Dendritic cell treated with granulocyte-macrophage colony-stimulating factor and Interleukin-4, amounts not matched to agents 40 ng/mL and 50 ng/mL, for 4 days (primary cell): ENCODE measurements at regions of chr3 and their contacts with region 1.

Region 1: GRCh38 chr3:25782938-25783660 is at the start of gene NGLY1:
- H3K4me3 Mint-ChIP-seq: peak within 1 kb of the TSS; percentile 81
- H3K27ac Mint-ChIP-seq: peak within 1 kb of the TSS; percentile 86
- H3K4me1 Mint-ChIP-seq: peaks cover 38% of the 10 kb centered on the region
- H3K27me3 Mint-ChIP-seq: peaks cover 2% of the 10 kb centered on the region

Region 2: GRCh38 chr3:25621087-25621486 is 162.0 kb before region 1 on chr3:
- intact Hi-C with region 1: no loop called
- H3K4me3 Mint-ChIP-seq: no peak overlapping the region
- H3K27ac Mint-ChIP-seq: no peak overlapping the region
- H3K4me1 Mint-ChIP-seq: no peaks in the 10 kb centered on the region
- H3K27me3 Mint-ChIP-seq: no peaks in the 10 kb centered on the region

Region 3: GRCh38 chr3:25648107-25648535 is 135.0 kb before region 1 on chr3:
- intact Hi-C with region 1: loop called (anchors 5 kb)
- H3K4me3 Mint-ChIP-seq: no peak overlapping the region
- H3K27ac Mint-ChIP-seq: no peak overlapping the region
- H3K4me1 Mint-ChIP-seq: peaks cover 32% of the 10 kb centered on the region
- H3K27me3 Mint-ChIP-seq: no peaks in the 10 kb centered on the region

Region 4: DNA sequence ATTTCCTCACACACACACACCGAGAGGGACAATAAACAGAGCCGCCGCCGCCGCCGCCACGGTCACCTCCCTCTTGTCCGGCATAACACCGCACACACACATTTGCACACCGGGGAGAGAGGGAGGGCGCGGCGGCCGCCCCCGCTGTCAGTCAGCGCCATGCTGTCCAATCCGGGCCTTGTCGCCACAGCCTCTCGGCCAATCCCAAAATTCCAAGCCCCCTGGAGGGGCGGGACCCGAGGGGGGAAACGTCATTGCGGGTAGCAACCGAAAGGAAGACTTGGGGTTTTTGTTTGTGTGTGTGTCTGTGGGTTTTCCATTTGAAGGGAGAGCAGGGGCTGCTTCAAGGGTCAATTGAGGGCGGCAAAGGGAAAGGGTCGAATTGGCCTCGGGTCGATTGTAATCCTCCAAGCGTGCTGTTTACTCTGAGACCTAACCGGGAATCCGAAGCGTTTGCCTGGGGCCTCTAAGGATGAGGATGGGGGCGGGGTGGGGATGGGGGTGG is 118.2 kb before region 1 on chr3 and contains the start of gene TOP2B:
- intact Hi-C with region 1: loop called (anchors 1 kb)
- H3K4me3 Mint-ChIP-seq: peak within 1 kb of the TSS; percentile 94
- H3K27ac Mint-ChIP-seq: peak within 1 kb of the TSS; percentile 97
- H3K4me1 Mint-ChIP-seq: peaks cover 29% of the 10 kb centered on the region
- H3K27me3 Mint-ChIP-seq: no peaks in the 10 kb centered on the region

Region 5: DNA sequence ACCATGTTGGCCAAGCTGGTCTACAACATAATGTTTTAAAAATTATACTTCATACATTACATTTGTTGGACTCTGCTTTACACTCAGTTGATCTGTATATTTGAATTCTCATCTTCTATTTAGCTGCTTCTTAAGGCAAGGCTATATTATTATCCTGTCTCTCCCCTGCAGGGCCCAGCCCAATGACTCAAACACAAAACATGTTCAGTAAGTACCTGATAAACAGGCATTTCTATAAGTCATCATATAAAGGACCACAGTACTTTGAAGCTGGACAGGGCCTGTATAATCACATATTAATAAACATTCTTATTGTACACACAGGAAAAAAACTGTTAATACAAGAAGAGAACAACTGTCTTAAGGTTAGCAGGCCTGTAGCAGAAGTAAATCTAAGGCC is 36.1 kb before region 1 on chr3:
- intact Hi-C with region 1: loop called (anchors 2 kb)
- H3K4me3 Mint-ChIP-seq: no peak overlapping the region
- H3K27ac Mint-ChIP-seq: no peak overlapping the region
- H3K4me1 Mint-ChIP-seq: peaks cover 53% of the 10 kb centered on the region
- H3K27me3 Mint-ChIP-seq: no peaks in the 10 kb centered on the region